Aorta (tissue), 5 donors: ENCODE measurements at regions of chr16 and their contacts with region 1.

Region 1: DNA sequence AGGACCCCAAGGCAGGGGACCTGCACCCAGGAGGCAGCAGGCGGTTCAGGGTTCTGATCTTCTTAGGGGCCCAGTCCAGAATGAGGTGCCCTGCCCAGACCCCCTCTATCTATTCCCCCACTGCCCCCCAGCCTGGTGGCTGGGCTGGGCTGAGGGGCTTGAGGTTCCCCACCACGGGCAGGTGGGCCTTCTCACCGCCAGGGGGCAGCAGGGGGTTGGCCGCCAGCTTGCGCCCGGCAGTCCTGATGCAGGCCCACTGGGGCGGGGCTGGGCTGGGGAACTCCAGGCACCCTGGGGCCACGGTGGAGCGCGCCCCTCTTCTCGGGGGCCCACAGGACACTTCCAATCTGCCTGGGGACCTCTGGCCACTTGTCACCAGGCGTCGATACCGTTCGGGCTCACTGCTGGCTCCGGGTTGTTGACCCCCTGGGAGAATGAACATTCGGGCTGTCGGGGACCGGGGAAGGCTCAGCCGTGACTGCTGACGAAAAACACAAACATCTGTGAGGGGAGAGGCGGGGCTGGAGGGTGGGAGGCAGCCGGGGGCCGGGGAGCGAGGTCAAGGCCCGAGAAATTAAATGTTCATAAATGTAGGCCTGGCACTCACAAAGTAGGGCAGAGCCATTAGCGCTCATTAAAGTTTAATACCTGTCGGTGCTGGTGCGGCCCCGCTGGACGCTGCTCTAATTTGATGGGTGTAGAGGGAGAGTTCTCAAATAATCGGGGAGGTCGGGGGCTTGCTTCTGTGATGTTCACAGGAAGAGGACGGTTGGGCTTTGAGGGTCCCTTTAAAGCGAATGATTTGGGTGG is 219.2 kb upstream of the GSE1 start:
- DNase-seq: peak; percentile 65 to 88
- ATAC-seq: no peak
- H3K4me3 ChIP-seq: no peak overlapping the region
- H3K27ac ChIP-seq: no peak overlapping the region
- H3K4me1 ChIP-seq: no peaks in the 10 kb centered on the region
- H3K27me3 ChIP-seq: no peaks in the 10 kb centered on the region

Region 2: DNA sequence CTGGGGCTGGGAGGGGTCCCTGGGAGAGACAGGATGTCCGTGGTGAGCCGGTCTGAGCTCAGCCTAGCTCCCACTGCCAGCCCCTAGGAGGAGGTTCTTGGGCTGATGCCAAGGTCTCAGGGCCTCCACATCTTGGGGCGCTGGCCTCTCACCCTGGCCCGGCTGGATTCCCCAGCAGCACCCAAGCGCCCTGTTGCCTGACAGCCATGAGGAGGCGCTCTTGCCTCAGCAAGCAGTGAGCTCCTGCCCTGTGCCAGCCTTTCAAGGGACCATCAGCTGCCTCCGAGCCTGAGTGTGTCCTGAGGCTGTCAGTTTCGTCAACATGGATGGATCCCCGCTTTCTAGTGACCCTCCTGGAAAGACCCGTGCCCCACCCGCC is 46.7 kb before region 1 on chr16:
- intact Hi-C with region 1: loop called in 1 of 2 experiments (anchors 1 kb)
- DNase-seq: no peak
- ATAC-seq: no peak
- H3K4me3 ChIP-seq: no peak overlapping the region
- H3K27ac ChIP-seq: no peak overlapping the region
- H3K4me1 ChIP-seq: no peaks in the 10 kb centered on the region
- H3K27me3 ChIP-seq: no peaks in the 10 kb centered on the region

Region 3: GRCh38 chr16:85369741-85370528 is 23.9 kb before region 1 on chr16:
- intact Hi-C with region 1: loop called in 1 of 2 experiments (anchors 2 kb)
- DNase-seq: peak; percentile 75 to 92
- ATAC-seq: peak; percentile 53
- H3K4me3 ChIP-seq: no peak overlapping the region
- H3K27ac ChIP-seq: peak overlapping the region in 1 of 2 donors; percentile 43
- H3K4me1 ChIP-seq: no peaks in the 10 kb centered on the region
- H3K27me3 ChIP-seq: no peaks in the 10 kb centered on the region